ENCODE measurements at regions of chr5 and their contacts with region 1.

Region 1: GRCh38 chr5:97499605-97500004 is 316.6 kb upstream of the RIOK2 start:
- DNase-seq: no peak
- H3K4me3 ChIP-seq: no peak overlapping the region
- H3K27ac ChIP-seq: no peak overlapping the region
- H3K4me1 ChIP-seq: no peaks in the 10 kb centered on the region
- H3K27me3 ChIP-seq: no peaks in the 10 kb centered on the region
- CTCF ChIP-seq: no peak
- POLR2A ChIP-seq: no peak

Region 2: DNA sequence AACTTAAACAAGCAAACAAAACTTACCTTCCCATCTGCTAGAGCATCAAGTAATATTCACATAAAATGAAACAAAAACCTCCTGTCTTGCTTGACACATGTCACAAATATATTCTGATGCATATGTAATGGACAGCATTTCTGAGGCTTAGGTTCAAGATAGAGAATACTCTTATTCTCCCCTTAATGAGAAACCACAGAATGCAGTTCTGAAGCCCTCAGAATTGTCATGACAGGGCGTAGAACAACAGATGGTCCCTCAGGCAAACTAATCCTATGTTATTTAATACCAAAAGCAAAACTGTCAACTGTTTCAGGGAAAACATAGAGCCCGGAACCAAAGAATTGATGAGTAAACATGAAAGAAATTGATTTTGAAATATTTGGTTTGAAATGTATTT is 86.6 kb before region 1 on chr5:
- intact Hi-C with region 1: no loop called
- DNase-seq: no peak
- H3K4me3 ChIP-seq: no peak overlapping the region
- H3K27ac ChIP-seq: no peak overlapping the region
- H3K4me1 ChIP-seq: no peaks in the 10 kb centered on the region
- H3K27me3 ChIP-seq: no peaks in the 10 kb centered on the region
- CTCF ChIP-seq: no peak
- POLR2A ChIP-seq: no peak

Region 3: DNA sequence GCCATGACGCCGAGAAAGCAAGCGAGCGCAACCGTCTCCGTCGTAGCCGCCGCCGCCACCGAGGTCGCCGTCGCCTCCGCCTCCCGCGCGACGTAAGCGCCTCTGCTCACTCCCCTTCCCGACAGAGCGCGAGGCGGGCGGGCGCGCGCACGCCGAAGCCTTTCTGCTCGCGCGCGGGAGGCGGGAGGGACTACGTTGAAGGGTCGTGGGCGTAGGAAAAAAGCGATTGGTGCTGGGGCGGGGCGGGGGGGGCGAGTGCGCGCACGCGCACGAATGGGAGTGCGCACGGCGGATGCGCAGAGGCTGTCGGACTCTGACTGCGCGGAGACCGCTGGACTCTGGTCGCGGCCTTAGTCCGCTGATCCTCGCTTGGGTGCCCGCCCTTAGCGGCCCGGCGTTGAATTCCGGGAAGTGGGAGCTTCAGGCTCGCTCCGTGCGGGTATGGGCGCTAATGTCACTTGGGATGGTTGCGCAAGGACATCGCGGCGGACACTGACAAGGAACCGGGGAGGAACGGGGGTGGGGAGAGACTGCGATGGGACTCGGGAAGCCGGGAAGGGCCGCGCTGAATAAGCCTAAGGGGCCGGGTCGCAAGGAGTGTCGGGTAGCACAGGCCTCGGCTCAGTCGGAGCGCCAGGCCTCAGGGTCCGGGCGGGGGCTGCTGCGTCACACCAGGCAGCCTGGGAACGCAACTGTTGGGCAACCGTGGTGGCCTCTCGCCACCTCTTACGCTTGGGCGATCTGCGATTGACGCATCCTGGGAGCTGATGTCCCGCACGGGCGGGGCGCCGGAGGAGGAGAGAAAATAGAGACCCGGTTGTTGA is 1429.5 kb after region 1 on chr5 and contains the start of gene CHD1:
- intact Hi-C with region 1: loop called (anchors 5 kb)
- DNase-seq: peak; percentile 93
- H3K4me3 ChIP-seq: peak within 1 kb of the TSS; percentile 85 to 88
- H3K27ac ChIP-seq: peak within 1 kb of the TSS; percentile 97 to 100
- H3K4me1 ChIP-seq: peaks cover 5% of the 10 kb centered on the region
- H3K27me3 ChIP-seq: no peaks in the 10 kb centered on the region
- CTCF ChIP-seq: peak in 1 of 4 experiments; percentile 3
- POLR2A ChIP-seq: peak; percentile 95
- total RNA-seq, gene CHD1: 38.5 to 52.9 TPM

Measured in prostate gland (tissue), 2 donors.